A673 (cell line): ENCODE measurements at regions of chr17 and their contacts with region 1.

Region 1: GRCh38 chr17:31321481-31321880 is at the start of gene EVI2A:
- DNase-seq: peak; percentile 57
- H3K4me3 ChIP-seq: no peak within 1 kb of the TSS
- H3K27ac ChIP-seq: no peak within 1 kb of the TSS
- H3K4me1 ChIP-seq: peaks cover 6% of the 10 kb centered on the region
- H3K27me3 ChIP-seq: no peaks in the 10 kb centered on the region
- CTCF ChIP-seq: no peak
- total RNA-seq, gene EVI2A: not detected in 2 replicates

Region 2: DNA sequence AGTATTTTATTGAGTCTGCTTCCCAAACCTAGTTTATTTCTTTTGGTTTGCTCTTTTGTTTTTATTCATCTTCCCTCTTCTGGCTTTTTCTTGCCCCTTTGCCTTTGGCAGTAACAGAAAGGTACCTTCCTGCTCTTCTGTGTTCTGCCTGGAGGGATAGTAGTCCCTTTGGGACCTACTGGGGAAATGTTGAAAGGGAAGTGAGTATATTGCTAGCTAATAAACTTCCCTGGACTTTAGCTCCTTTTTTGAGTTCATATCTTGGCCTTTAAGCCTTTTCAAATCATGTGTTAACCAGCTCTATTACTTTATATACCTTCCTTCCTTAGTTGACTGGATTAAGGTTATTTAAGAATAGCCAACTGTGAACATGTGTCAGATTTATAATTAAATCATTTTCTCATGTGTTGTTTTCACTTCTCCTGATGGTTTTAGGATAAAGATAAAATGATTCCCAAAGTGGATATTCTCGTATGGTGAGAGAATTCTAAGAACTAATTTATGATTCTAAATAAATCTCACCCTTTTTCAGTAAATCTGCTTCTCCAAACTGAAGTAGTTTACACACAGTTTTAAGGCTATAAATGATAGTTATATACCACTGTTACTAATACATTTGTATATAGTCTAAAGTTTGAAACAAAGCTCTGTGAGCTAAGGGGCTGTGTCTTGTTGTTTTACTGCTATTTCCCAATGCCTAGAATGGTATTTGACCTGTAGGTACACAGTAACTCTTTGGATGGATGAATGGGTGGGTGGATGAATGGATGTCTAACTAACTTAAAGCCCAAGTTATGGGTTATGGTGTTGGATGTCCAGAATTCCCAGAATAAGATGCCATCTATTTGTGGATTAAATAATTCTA is 70.1 kb before region 1 on chr17:
- CTCF ChIA-PET with region 1: no interaction called
- POLR2A ChIA-PET with region 1: no interaction called
- intact Hi-C with region 1: loop called (anchors 10 kb)
- DNase-seq: peak; percentile 2
- H3K4me3 ChIP-seq: no peak overlapping the region
- H3K27ac ChIP-seq: no peak overlapping the region
- H3K4me1 ChIP-seq: peaks cover 32% of the 10 kb centered on the region
- H3K27me3 ChIP-seq: no peaks in the 10 kb centered on the region
- CTCF ChIP-seq: no peak

Region 3: GRCh38 chr17:31558748-31559644 is 237.5 kb after region 1 on chr17:
- CTCF ChIA-PET with region 1: no interaction called
- POLR2A ChIA-PET with region 1: interaction called, 17 read pairs
- intact Hi-C with region 1: no loop called
- DNase-seq: peak; percentile 44
- H3K4me3 ChIP-seq: peak overlapping the region; percentile 43
- H3K27ac ChIP-seq: no peak overlapping the region
- H3K4me1 ChIP-seq: no peaks in the 10 kb centered on the region
- H3K27me3 ChIP-seq: no peaks in the 10 kb centered on the region
- CTCF ChIP-seq: peak; percentile 45; the same call in 1 of the 2 replicates